ENCODE measurements at regions of chr1 and their contacts with region 1.

Region 1: DNA sequence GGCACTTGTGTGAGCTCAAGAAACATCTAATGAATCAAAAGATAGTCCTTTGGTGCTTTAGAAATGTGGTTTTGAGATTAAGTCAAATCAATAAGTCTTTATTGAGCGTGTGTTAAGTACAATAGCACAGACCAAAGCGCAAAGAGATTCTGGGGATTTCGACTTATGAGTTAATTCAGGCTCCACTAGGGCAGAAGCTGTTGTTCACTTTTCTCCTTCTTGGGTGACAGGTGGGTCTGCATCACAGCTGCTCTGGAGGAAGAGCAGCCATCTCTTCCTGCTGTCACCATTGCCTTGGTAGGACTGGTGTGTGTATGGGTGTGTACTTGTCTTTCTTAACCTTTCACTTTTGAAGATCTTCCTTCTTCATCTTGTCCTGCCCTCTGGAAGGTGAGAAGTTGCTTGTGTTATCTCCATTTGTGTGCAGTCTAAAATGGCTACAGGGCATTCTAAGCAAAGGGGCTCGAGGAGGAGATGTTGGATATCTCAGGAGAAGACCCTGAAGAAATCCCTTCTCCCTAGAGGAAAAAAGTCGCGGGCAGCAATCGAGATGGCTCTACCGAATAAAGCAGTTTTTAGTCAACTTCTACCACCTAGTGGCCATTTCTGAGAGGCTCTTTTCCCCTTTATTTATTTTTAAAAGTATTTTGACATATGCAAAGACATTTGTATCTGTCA is 22.9 kb upstream of the DISC1 start:
- DNase-seq: no peak
- H3K4me3 ChIP-seq: peak overlapping the region; percentile 46 to 47
- H3K27ac ChIP-seq: peak overlapping the region in 1 of 2 donors; percentile 4
- H3K4me1 ChIP-seq: peaks cover 0 to 26% (median 5%) of the 10 kb centered on the region in 4 donors
- H3K27me3 ChIP-seq: no peaks in the 10 kb centered on the region
- CTCF ChIP-seq: peak; percentile 61 to 75

Region 2: GRCh38 chr1:231357831-231358354 is 245.8 kb before region 1 on chr1:
- intact Hi-C with region 1: loop called (anchors 5 kb)
- DNase-seq: peak in 1 of 2 donors; percentile 37
- H3K4me3 ChIP-seq: no peak overlapping the region
- H3K27ac ChIP-seq: no peak overlapping the region
- H3K4me1 ChIP-seq: peaks cover 0 to 5% (median 2%) of the 10 kb centered on the region in 4 donors
- H3K27me3 ChIP-seq: no peaks in the 10 kb centered on the region
- CTCF ChIP-seq: peak; percentile 63 to 88

Measured in tibial artery (tissue), 4 donors.